ENCODE measurements at regions of chr3 and their contacts with region 1.

Region 1: DNA sequence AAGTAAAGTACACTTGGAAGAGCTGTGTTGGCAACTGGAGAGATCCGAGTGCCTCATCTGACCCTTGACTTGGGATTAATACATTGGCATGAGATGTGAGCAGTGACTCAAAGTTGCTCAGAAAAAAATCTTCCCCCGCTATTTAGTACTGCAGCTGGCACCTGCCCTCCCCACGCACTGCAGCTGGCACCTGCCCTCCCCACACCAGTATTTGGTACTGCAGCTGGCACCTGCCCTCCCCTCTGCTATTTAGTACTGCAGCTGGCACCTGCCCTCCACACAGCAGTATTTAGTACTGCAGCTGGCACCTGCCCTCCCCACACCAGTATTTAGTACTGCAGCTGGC is 3.9 kb upstream of the MUC20 start:
- DNase-seq: peak; percentile 48 to 94
- H3K4me3 ChIP-seq: 0 out of 2 replicates have a peak overlapping the region, but pooled peaks have one; percentile 0
- H3K27ac ChIP-seq: peak overlapping the region; percentile 93
- H3K4me1 ChIP-seq: peaks cover 72% of the 10 kb centered on the region
- H3K27me3 ChIP-seq: no peaks in the 10 kb centered on the region
- CTCF ChIP-seq: no peak

Region 2: DNA sequence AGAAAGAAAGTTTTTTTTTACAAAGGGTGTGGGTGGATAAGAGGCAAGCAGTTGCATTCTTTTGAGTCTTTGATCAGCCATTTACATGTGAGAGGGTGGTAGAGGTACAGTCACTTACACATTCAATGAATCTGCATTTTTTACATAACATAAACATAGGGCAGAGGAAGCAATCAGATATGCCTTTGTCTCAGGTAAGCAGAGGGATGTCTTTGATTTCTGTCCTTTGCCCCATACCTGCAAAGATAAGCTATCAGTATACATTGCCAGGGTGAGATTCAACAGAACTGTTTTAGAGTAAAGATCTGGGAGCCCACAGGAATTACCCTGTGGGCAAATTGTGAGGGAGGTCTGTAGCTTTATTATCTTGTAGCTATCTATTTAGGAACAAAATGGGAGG is 168.3 kb before region 1 on chr3:
- CTCF ChIA-PET with region 1: no interaction called
- POLR2A ChIA-PET with region 1: interaction called, 12 read pairs
- intact Hi-C with region 1: no loop called
- DNase-seq: peak in 1 of 2 experiments; percentile 55
- H3K4me3 ChIP-seq: no peak overlapping the region
- H3K27ac ChIP-seq: no peak overlapping the region
- H3K4me1 ChIP-seq: peaks cover 34% of the 10 kb centered on the region
- H3K27me3 ChIP-seq: no peaks in the 10 kb centered on the region
- CTCF ChIP-seq: no peak

Region 3: DNA sequence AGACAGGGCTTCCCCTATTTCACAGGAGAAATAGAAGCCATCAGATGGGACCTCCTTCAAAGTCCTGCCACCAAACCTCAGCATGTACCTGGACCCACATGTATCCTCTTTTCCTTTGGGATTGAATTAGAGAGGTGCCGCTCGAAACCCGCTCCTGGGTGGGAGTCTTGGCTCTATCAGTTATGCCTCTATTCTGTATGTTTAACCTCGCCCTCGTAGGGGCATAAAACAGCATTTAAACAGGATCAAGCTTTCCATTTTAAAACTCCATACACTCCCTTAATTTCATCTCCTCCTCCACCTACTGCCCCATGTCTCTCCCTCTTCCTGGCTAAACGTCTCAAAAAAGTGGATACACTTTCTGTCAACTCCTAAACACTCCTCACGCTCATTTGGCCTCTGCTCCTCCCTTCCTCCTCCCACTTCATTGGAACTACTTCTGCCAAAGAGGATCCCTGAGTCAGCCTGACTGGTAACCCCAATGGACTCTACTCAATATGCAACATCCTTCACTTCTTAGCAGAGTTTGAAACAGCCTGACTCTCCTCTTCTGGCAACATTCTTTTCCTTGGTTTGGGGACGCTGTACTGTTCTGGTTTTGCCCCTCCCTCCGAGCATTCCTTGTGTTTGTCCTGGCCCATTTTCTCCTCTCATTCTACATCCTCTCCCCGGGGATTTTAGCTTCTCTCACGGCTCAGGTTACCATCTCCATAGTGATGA is 19.1 kb before region 1 on chr3:
- CTCF ChIA-PET with region 1: interaction called, 5 read pairs
- POLR2A ChIA-PET with region 1: interaction called, 4 read pairs
- intact Hi-C with region 1: loop called (anchors 1 kb)
- DNase-seq: peak; percentile 77 to 93
- H3K4me3 ChIP-seq: peak overlapping the region; percentile 0; the same call in 1 of the 2 replicates
- H3K27ac ChIP-seq: peak overlapping the region; percentile 90
- H3K4me1 ChIP-seq: peaks cover 39% of the 10 kb centered on the region
- H3K27me3 ChIP-seq: no peaks in the 10 kb centered on the region
- CTCF ChIP-seq: no peak

Region 4: GRCh38 chr3:195823280-195823679 is 106.4 kb after region 1 on chr3:
- CTCF ChIA-PET with region 1: no interaction called
- POLR2A ChIA-PET with region 1: interaction called, 6 read pairs
- intact Hi-C with region 1: loop called (anchors 2 kb)
- DNase-seq: peak in 1 of 2 experiments; percentile 74
- H3K4me3 ChIP-seq: peak overlapping the region; percentile 69; the same call in 1 of the 2 replicates
- H3K27ac ChIP-seq: peak overlapping the region; percentile 95
- H3K4me1 ChIP-seq: peaks cover 59% of the 10 kb centered on the region
- H3K27me3 ChIP-seq: no peaks in the 10 kb centered on the region
- CTCF ChIP-seq: no peak

Region 5: GRCh38 chr3:195900436-195901375 is 183.9 kb after region 1 on chr3:
- CTCF ChIA-PET with region 1: interaction called, 15 read pairs
- POLR2A ChIA-PET with region 1: no interaction called
- intact Hi-C with region 1: no loop called
- DNase-seq: no peak
- H3K4me3 ChIP-seq: no peak overlapping the region
- H3K27ac ChIP-seq: no peak overlapping the region
- H3K4me1 ChIP-seq: peaks cover 26% of the 10 kb centered on the region
- H3K27me3 ChIP-seq: no peaks in the 10 kb centered on the region
- CTCF ChIP-seq: no peak

Region 6: DNA sequence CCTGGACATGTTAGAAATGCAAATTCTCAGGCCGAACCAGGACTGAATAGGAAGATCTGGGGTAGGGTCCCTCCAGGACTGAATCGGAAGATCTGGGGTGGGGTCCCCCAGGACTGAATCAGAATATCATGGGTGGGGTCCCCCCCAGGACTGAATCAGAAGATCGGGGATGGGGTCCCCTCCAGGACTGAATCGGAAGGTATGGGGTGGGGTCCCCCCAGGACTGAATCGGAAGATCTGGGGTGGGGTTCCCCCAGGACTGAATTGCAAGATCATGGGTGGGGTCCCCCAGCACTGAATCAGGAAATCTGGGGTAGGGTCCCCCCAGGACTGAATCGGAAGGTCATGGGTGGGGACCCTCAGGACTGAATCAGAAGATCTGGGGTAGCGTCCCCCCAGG is 239.7 kb after region 1 on chr3:
- CTCF ChIA-PET with region 1: no interaction called
- POLR2A ChIA-PET with region 1: interaction called, 19 read pairs
- intact Hi-C with region 1: no loop called
- DNase-seq: peak in 1 of 2 experiments; percentile 29
- H3K4me3 ChIP-seq: no peak overlapping the region
- H3K27ac ChIP-seq: no peak overlapping the region
- H3K4me1 ChIP-seq: peaks cover 13% of the 10 kb centered on the region
- H3K27me3 ChIP-seq: no peaks in the 10 kb centered on the region
- CTCF ChIP-seq: no peak